Activated B cell treated with CpG ODN at 0.5 μM for 24 hours (primary cell): ENCODE measurements at regions of chr18 and their contacts with region 1.

Region 1: DNA sequence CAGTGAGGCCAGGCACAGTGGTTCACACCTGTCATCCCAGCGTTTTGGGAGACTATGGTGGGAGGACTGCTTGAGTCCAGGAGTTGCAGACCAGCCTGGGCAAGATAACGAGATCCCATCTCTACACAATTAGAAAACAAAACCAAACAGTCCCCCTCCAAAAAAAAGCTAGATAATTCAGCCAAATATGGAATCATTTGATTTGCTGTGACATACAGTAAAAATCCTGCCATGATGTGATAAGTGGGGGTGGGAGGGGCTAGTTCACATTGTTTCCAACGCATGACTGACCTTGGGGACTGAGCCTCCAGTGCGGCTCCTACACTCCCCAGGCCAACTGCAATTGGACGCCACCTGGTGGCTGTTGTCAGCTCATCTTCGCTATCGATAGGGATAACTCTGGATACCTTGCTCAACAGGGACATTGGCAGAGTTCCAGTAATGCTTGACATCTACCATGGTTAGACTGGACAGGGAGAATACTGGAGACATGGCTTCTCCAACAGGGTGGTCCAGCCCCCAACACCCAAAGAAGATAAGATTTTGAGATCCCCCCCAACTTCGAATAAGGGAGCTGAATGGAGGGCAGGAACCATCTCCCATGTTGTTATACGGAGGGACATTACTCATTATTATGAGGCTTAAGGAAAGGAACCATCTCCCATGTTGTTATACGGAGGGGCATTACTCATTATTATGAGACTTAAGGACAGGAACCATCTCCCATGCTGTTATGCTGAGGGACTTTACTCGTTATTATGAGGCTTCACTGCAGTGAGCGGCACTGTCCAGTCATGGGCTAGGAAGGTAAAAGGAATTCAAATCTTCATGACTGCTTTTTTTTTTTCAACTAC is 135.9 kb downstream of the TGIF1 start:
- DNase-seq: peak; percentile 40
- ATAC-seq: peak; percentile 45
- H3K4me3 Mint-ChIP-seq: peak overlapping the region; percentile 74
- H3K27ac Mint-ChIP-seq: peak overlapping the region; percentile 96
- H3K4me1 Mint-ChIP-seq: peaks cover 53% of the 10 kb centered on the region
- H3K27me3 Mint-ChIP-seq: no peaks in the 10 kb centered on the region
- CTCF ChIP-seq: no peak

Region 2: DNA sequence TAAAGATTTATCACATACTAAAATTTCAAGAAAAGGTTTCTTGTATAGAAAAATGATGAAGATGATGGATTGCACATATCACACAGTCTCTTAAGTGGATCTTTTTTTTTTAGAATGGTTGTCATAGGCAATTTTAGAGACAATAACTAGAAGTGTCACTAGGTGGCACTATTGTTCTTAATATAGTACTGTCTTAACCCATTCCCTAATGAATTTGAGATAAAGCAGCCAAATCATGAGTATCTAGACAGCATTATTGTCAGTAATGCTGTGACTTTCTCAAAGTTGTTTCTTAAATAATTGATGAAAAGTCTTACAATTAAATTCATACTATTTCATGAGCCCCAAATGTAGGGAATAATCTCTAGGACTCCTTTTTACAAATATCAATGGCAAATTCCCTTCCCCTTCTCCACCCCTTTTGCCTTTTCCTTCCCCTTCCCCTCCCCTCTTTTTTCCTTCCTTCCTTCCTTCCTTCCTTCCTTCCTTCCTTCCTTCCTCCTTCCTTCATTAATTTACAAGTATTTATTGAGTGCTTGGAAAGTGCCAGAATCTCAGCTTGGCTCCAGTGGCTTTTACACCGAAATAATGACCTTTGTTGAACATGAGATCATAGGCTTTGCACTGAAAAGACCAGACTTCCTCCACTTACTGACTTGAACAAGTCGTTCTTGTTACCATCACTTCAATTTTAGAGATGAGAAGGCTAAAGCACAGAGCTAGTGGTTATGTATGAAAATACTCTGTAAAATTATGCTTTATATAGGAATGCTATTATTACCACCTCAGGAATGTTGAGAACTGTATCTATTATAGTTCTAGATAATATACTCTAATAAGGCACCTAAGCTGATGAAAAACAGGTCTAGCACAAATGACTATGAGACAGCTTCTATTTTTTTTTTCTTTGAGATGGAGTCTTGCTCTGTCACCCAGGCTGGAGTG is 304.2 kb before region 1 on chr18:
- CTCF ChIA-PET with region 1: interaction called, 9 read pairs
- POLR2A ChIA-PET with region 1: interaction called, 9 read pairs
- intact Hi-C with region 1: loop called (anchors 1 kb)
- DNase-seq: no peak
- ATAC-seq: peak; percentile 39
- H3K4me3 Mint-ChIP-seq: no peak overlapping the region
- H3K27ac Mint-ChIP-seq: no peak overlapping the region
- H3K4me1 Mint-ChIP-seq: peaks cover 41% of the 10 kb centered on the region
- H3K27me3 Mint-ChIP-seq: no peaks in the 10 kb centered on the region
- CTCF ChIP-seq: peak; percentile 49

Region 3: DNA sequence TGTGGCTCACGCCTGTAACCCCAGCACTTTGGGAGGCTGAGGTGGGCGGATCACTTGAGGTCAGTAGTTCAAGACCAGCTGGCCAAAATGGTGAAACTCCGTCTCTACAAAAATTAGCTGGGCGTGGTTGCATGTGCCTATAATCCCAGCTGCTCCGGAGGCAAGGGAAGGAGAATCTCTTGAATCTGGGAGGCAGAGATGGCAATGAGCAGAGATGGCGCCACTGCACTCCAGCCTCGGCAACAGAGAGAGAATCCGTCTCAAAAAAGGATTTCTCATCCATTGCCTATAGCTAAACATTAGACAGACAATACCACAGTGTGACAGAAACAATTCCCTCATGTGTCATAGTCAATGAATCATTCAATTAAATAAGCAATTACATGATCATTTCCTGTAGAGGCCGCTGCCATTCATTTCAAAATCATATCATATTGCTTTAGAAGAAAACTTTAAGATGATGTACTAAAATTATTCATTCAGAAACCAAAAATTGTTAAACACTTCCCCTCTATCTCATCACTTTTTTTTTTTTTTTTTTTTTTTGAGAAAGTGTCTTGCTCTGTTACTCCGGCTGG is 205.4 kb before region 1 on chr18:
- CTCF ChIA-PET with region 1: interaction called, 4 read pairs
- POLR2A ChIA-PET with region 1: interaction called, 7 read pairs
- intact Hi-C with region 1: loop called (anchors 1 kb)
- DNase-seq: no peak
- ATAC-seq: peak; percentile 66
- H3K4me3 Mint-ChIP-seq: no peak overlapping the region
- H3K27ac Mint-ChIP-seq: no peak overlapping the region
- H3K4me1 Mint-ChIP-seq: peaks cover 21% of the 10 kb centered on the region
- H3K27me3 Mint-ChIP-seq: no peaks in the 10 kb centered on the region
- CTCF ChIP-seq: no peak

Region 4: DNA sequence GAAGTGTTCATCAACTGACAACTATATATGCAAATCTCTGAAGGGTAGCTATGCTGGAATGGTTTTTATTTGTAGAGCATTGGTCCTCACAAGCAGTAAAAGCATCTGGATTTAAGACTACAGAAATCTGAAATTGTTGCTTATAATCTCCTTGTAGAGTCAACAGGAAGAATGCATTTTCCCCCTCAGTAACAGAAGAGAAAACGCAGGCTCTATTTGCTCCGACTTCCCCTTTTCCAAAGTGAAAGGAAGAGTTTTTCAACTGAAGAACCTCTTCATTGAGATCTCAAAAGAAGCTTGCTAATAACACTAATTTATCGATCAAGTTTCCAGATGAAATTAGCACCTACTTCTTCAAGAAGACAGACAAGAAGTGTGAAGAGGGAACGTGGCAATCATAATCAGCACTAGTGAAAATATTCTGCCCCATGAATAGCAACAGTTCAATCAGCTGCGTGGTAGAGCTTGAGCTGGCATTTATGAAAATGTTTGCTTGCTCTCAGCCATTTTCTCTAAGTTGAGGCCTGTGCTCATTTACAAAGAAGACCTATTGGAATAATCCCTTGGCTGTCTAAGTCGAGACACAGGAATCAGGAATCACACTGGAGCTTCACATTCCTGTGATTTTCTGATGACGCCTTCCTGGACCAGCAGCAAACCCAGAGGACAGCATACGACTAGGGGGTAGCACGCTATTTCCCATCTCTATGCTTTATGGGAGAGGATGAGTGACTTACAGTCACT is 92.2 kb before region 1 on chr18:
- CTCF ChIA-PET with region 1: interaction called, 9 read pairs
- POLR2A ChIA-PET with region 1: interaction called, 15 read pairs
- intact Hi-C with region 1: loop called (anchors 1 kb)
- DNase-seq: no peak
- ATAC-seq: peak; percentile 35
- H3K4me3 Mint-ChIP-seq: peak overlapping the region; percentile 83
- H3K27ac Mint-ChIP-seq: peak overlapping the region; percentile 88
- H3K4me1 Mint-ChIP-seq: peaks cover 43% of the 10 kb centered on the region
- H3K27me3 Mint-ChIP-seq: peaks cover 2% of the 10 kb centered on the region
- CTCF ChIP-seq: no peak

Region 5: GRCh38 chr18:3525870-3526420 is 59.9 kb before region 1 on chr18:
- CTCF ChIA-PET with region 1: interaction called, 7 read pairs
- POLR2A ChIA-PET with region 1: interaction called, 19 read pairs
- intact Hi-C with region 1: loop called (anchors 2 kb)
- DNase-seq: no peak
- ATAC-seq: peak; percentile 78
- H3K4me3 Mint-ChIP-seq: peak overlapping the region; percentile 62
- H3K27ac Mint-ChIP-seq: peak overlapping the region; percentile 20
- H3K4me1 Mint-ChIP-seq: peaks cover 18% of the 10 kb centered on the region
- H3K27me3 Mint-ChIP-seq: no peaks in the 10 kb centered on the region
- CTCF ChIP-seq: no peak

Region 6: DNA sequence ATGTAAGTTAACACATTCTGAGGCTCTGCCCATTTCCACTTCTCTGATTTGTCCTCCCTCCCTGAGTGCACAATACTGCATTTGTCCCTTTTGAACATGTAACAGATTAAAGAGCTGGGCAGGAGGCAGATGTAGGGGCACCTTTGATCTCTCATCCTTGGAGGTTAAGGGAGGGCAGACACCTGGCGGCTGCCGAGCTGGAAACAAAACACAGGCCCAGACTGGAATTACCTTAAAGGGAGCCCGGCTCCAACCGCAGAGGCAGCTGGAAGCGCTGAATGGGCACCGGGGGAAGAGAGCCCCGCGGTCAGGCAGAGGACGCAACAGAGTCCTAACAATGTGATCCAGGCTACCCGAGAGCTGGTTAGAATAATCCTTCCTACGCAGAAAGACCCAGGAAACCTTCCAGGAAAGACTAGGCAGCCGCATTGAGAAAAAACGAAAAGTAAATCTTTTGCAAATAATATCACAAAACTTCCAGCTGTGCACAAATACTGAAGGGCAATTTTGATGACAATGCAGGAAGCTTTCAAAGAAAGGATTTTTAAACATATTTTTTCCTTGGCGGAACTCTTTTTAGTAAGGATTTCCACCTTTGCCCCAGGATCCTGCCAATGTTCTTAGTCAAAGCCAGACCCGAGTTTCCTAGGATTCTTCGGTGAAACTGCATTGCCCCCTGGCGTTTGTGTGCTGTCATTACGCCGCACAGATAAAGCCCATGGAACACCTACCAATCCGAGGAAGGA is 80.1 kb after region 1 on chr18:
- CTCF ChIA-PET with region 1: interaction called, 33 read pairs
- POLR2A ChIA-PET with region 1: interaction called, 8 read pairs
- intact Hi-C with region 1: no loop called
- DNase-seq: peak; percentile 51
- ATAC-seq: peak; percentile 84
- H3K4me3 Mint-ChIP-seq: no peak overlapping the region
- H3K27ac Mint-ChIP-seq: no peak overlapping the region
- H3K4me1 Mint-ChIP-seq: peaks cover 21% of the 10 kb centered on the region
- H3K27me3 Mint-ChIP-seq: no peaks in the 10 kb centered on the region
- CTCF ChIP-seq: peak; percentile 83